Naive thymus-derived CD4-positive, alpha-beta T cell (primary cell): ENCODE measurements at regions of chr5 and their contacts with region 1.

Region 1: DNA sequence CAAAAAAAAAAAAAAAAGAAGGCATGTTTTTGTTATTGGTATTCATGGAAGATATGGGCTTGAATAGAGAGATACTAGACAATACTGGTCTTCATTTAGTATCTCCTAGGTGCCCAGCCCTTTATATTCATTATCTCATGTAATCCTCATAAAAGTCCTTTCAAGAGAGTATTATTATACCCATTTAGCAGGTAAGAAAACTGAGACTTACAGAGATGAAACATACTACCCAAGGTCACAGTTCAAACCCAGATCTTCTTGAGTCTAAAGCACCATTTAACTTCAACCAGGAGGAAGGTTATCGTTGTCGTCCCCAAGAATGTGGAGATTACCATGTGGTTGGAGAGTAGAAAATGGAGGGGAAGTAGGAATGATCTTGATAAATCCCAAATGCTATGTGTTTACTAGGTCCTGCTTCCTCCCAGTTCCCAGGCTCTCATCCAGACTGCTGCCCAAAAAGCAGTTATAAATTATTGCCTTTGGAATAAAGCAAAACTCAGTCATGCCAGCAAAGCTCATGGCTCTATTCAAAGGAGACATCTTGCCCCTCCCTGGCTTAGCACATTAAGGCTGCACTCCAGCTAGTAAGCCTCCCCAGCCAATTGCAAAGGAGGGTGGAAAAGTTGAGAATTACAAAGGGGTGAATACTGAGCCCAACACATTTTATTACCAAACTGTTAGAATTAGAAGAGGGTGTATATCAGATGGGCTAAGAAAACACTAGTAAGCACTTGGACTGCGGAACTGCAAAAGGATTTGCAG is 163.9 kb downstream of the PIK3R1 start:
- DNase-seq: no peak
- ATAC-seq: no peak
- H3K4me3 ChIP-seq: no peak overlapping the region
- H3K4me3 Mint-ChIP-seq: no peak overlapping the region
- H3K27ac ChIP-seq: no peak overlapping the region
- H3K27ac Mint-ChIP-seq: peak overlapping the region in 1 of 9 donors; percentile 67
- H3K4me1 ChIP-seq: peaks cover 0 to 18% of the 10 kb centered on the region in 2 donors
- H3K4me1 Mint-ChIP-seq: peaks cover 0 to 84% (median 13%) of the 10 kb centered on the region in 7 donors
- H3K27me3 ChIP-seq: no peaks in the 10 kb centered on the region
- H3K27me3 Mint-ChIP-seq: peaks cover 0 to 9% (median 0%) of the 10 kb centered on the region in 5 donors

Region 2: DNA sequence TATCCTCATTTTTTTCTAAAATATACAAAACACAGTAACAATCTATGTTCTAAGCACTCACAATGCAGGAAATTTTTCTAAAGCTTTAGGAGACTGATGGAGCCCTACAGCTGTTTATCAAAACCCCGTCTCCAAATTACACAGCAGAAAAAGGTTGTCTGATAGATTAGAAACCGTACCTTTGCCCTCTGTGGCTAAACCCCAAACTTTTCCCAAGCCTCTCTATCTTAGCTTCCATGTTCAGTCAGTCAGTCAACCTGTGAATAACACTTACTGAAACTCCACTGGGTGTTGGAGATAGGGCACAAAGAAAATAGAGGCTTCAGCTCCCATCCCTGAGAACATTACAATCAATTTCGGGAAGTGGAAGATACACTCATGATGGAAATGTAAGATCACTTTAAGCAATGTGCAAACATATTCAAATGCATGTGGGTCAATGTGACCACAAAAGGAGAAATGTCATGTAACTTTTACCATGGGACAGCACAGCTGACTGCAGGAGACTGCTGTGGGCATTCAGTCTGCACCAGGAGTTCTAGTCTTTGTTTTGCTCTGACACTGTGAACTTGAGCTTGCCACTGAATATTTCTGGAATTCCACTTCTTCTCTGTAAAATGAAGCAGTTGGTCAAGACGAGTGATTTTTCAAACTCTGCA is 443.4 kb before region 1 on chr5:
- CTCF ChIA-PET with region 1: no interaction called
- POLR2A ChIA-PET with region 1: no interaction called
- intact Hi-C with region 1: no loop called
- DNase-seq: no peak
- ATAC-seq: peak; percentile 20
- H3K4me3 ChIP-seq: no peak overlapping the region
- H3K4me3 Mint-ChIP-seq: no peak overlapping the region
- H3K27ac ChIP-seq: no peak overlapping the region
- H3K27ac Mint-ChIP-seq: no peak overlapping the region
- H3K4me1 ChIP-seq: no peaks in the 10 kb centered on the region
- H3K4me1 Mint-ChIP-seq: peaks cover 0 to 2% (median 0%) of the 10 kb centered on the region in 7 donors
- H3K27me3 ChIP-seq: no peaks in the 10 kb centered on the region
- H3K27me3 Mint-ChIP-seq: peaks cover 0 to 7% (median 0%) of the 10 kb centered on the region in 5 donors

Region 3: GRCh38 chr5:68149189-68149588 is 230.3 kb before region 1 on chr5:
- CTCF ChIA-PET with region 1: no interaction called
- POLR2A ChIA-PET with region 1: no interaction called
- intact Hi-C with region 1: no loop called
- DNase-seq: no peak
- ATAC-seq: no peak
- H3K4me3 ChIP-seq: no peak overlapping the region
- H3K4me3 Mint-ChIP-seq: no peak overlapping the region
- H3K27ac ChIP-seq: no peak overlapping the region
- H3K27ac Mint-ChIP-seq: no peak overlapping the region
- H3K4me1 ChIP-seq: no peaks in the 10 kb centered on the region
- H3K4me1 Mint-ChIP-seq: peaks cover 0 to 3% (median 0%) of the 10 kb centered on the region in 7 donors
- H3K27me3 ChIP-seq: no peaks in the 10 kb centered on the region
- H3K27me3 Mint-ChIP-seq: no peaks in the 10 kb centered on the region

Region 4: DNA sequence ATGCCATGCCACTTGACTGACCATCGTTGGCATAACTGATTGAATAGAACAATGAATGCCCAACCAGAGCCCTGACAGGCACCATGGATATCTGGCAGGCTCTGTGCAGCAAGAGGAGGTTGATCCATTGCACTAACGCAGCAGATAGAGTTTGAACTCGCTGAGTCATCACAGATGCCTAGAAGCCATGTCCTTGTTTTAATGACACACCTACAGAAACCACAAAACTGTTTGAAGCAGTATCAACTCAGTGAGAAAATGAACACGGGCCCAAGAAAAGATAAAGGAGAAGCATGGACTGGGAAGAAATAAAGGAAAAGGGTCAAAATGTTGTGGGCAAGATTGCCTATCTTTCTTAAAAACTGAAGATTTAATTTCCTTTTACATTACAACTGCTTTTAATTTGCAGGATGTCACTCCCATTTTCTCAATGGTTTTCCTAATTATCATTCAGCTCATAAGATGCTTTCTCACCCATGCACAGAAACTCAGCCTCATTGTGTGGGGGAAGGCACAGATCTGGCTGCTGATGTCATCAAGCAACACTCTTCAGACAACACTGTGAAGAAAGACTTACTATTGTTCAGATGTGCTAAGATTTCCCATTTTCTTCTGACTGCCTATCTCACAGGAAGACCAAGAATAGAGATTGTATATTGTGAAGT is 34.9 kb before region 1 on chr5:
- CTCF ChIA-PET with region 1: no interaction called
- POLR2A ChIA-PET with region 1: no interaction called
- intact Hi-C with region 1: loop called in 1 of 2 experiments (anchors 2 kb)
- DNase-seq: peak in 1 of 9 donors; percentile 27
- ATAC-seq: peak; percentile 61
- H3K4me3 ChIP-seq: no peak overlapping the region
- H3K4me3 Mint-ChIP-seq: peak overlapping the region in 1 of 10 donors; percentile 47
- H3K27ac ChIP-seq: no peak overlapping the region
- H3K27ac Mint-ChIP-seq: peak overlapping the region in 1 of 9 donors; percentile 1
- H3K4me1 ChIP-seq: peaks cover 0 to 4% of the 10 kb centered on the region in 2 donors
- H3K4me1 Mint-ChIP-seq: peaks cover 0 to 26% (median 9%) of the 10 kb centered on the region in 7 donors
- H3K27me3 ChIP-seq: no peaks in the 10 kb centered on the region
- H3K27me3 Mint-ChIP-seq: peaks cover 0 to 11% (median 0%) of the 10 kb centered on the region in 5 donors

Region 5: GRCh38 chr5:68406767-68407241 is 27.3 kb after region 1 on chr5:
- CTCF ChIA-PET with region 1: no interaction called
- POLR2A ChIA-PET with region 1: no interaction called
- intact Hi-C with region 1: loop called in 1 of 2 experiments (anchors 2 kb)
- DNase-seq: peak in 3 of 9 donors; percentile 2 to 29 (median 11)
- ATAC-seq: peak; percentile 40
- H3K4me3 ChIP-seq: no peak overlapping the region
- H3K4me3 Mint-ChIP-seq: peak overlapping the region in 7 of 10 donors; percentile 5 to 66 (median 52)
- H3K27ac ChIP-seq: no peak overlapping the region
- H3K27ac Mint-ChIP-seq: peak overlapping the region in 8 of 9 donors; percentile 34 to 87 (median 54)
- H3K4me1 ChIP-seq: peaks cover 8 to 18% of the 10 kb centered on the region in 2 donors
- H3K4me1 Mint-ChIP-seq: peaks cover 12 to 26% (median 14%) of the 10 kb centered on the region in 7 donors
- H3K27me3 ChIP-seq: no peaks in the 10 kb centered on the region
- H3K27me3 Mint-ChIP-seq: peaks cover 0 to 2% (median 0%) of the 10 kb centered on the region in 5 donors